ENCODE measurements at regions of chr6 and their contacts with region 1.

Region 1: DNA sequence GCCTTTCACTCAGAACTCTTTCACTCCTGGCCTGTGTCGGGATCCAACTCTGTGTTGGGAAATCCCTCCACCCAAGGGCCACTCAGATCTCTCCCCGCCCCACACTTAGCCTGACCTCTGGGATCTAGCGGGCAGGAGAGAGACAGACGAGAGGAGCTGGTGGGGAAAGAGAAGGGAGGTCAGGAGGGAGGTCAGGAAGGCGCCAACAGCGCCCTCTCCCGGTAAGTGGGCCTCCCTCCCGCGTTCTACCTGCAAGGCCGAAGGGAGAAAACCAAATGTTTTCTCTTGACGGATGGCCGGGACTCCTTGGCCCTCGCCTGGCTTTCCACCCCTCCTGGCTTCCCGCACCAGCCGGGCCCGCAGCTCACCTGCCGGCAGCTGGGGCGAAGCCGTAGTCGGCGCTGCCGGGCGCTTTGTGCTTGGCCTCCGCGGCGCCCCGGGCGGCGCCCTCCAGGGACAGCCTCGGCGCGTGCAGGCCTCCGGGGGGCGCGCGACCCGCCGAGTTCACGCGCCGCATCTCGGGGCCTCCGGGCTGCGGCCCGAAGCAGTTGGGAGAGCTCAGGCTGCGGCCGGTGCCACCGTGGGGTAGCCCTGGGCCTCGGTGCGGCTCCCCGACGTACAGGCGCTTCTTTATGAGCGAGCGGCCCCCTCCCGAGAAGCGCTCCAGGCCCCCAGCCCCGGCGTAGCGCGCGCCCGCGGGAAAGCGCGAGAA is 38.2 kb downstream of the C6orf132 start:
- DNase-seq: peak; percentile 92
- H3K4me3 Mint-ChIP-seq: peak overlapping the region; percentile 78
- H3K27ac Mint-ChIP-seq: peak overlapping the region; percentile 78
- H3K4me1 Mint-ChIP-seq: peaks cover 29% of the 10 kb centered on the region
- H3K27me3 Mint-ChIP-seq: peaks cover 6% of the 10 kb centered on the region

Region 2: DNA sequence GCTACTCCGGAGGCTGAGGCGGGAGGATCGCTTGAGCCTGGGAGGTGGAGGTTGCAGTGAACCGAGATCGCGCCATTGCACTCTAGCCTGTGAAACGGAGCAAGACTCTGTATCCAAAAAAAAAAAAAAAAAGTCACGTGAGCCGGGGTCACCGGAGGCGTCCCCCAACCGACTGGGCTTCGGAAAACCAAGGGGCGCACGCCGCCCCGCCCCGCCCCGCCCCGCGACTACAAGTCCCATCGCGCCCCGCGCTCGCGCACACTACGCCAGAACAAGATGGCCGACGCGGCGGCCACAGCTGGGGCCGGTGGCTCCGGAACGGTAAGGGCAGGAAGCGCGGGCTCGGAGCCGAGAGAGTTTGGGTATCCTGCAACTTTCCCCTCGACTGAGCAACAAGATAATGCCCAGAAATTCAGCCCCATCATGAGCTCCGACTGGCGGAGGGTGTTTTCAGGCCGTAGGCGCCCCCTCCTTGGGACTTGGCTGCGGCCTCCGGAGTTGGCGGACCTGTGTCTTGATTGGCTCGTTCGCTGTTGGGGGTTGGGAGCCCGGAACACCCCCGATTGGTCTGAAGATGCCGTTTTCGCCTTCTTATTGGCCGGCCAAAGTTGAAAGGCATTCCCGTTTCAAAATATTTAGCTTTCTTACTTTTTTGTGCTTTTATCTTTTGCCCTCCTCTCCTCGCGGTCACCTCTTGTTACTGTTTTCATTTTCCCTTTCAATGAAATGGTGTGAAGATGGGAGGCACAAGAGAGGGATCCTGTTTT is 53.8 kb before region 1 on chr6 and contains the start of gene TAF8:
- intact Hi-C with region 1: loop called (anchors 2 kb)
- DNase-seq: peak; percentile 97
- H3K4me3 Mint-ChIP-seq: peak within 1 kb of the TSS; percentile 98
- H3K27ac Mint-ChIP-seq: peak within 1 kb of the TSS; percentile 99
- H3K4me1 Mint-ChIP-seq: peaks cover 65% of the 10 kb centered on the region
- H3K27me3 Mint-ChIP-seq: no peaks in the 10 kb centered on the region
- total RNA-seq, gene TAF8: 38.1 and 38.7 TPM in 2 replicates

Region 3: DNA sequence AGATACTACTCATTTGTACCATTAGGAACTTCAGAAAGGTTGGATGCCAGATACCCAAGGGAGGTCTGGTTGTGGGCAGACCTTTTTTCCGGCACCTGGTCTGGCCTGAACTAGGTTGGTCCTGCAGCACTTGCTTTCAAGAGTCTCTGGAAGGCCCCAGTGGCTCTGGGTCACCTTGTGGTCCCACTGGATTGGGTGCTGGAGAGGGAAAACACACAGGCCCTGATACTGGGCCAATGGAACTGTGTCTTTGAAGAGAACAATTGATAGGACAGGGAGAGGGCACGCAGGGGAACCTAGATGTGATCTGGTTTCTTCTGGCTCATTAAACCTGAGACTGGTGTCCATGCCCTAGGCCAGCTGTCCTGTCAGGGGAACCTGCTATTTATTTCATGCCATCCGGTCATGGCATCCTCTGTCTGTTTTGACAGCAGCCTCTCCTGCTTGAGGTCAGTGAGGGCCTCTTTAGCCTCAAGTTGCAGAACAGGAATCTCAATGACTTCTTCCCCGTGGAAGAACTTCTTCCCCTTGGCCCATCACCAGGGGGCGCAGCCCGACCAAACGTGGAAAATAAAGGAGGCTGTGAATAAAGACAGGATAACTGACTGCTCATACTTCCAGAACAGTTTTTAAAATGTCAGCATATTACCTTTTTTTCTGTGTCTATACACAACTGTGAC is 29.0 kb before region 1 on chr6:
- intact Hi-C with region 1: loop called (anchors 1 kb)
- DNase-seq: peak; percentile 88
- H3K4me3 Mint-ChIP-seq: no peak overlapping the region
- H3K27ac Mint-ChIP-seq: no peak overlapping the region
- H3K4me1 Mint-ChIP-seq: peaks cover 8% of the 10 kb centered on the region
- H3K27me3 Mint-ChIP-seq: no peaks in the 10 kb centered on the region